Mammary epithelial cell (primary cell): ENCODE measurements at regions of chr19 and their contacts with region 1.

Region 1: GRCh38 chr19:940591-941291 is 14.9 kb downstream of the ARID3A start:
- DNase-seq: peak; percentile 59
- H3K4me3 ChIP-seq: peak overlapping the region in 2 of 3 experiments; percentile 7 to 28
- H3K27ac ChIP-seq: no peak overlapping the region
- H3K4me1 ChIP-seq: peaks cover 20% of the 10 kb centered on the region
- H3K27me3 ChIP-seq: no peaks in the 10 kb centered on the region
- CTCF ChIP-seq: no peak

Region 2: GRCh38 chr19:860481-861101 is 80.2 kb before region 1 on chr19:
- CTCF ChIA-PET with region 1: no interaction called
- dilution Hi-C with region 1: no loop called
- in situ Hi-C with region 1: no loop called
- intact Hi-C with region 1: no loop called
- DNase-seq: peak; percentile 61
- H3K4me3 ChIP-seq: peak overlapping the region in 1 of 3 experiments; percentile 20
- H3K27ac ChIP-seq: no peak overlapping the region
- H3K4me1 ChIP-seq: peaks cover 4% of the 10 kb centered on the region
- H3K27me3 ChIP-seq: no peaks in the 10 kb centered on the region
- CTCF ChIP-seq: no peak

Region 3: DNA sequence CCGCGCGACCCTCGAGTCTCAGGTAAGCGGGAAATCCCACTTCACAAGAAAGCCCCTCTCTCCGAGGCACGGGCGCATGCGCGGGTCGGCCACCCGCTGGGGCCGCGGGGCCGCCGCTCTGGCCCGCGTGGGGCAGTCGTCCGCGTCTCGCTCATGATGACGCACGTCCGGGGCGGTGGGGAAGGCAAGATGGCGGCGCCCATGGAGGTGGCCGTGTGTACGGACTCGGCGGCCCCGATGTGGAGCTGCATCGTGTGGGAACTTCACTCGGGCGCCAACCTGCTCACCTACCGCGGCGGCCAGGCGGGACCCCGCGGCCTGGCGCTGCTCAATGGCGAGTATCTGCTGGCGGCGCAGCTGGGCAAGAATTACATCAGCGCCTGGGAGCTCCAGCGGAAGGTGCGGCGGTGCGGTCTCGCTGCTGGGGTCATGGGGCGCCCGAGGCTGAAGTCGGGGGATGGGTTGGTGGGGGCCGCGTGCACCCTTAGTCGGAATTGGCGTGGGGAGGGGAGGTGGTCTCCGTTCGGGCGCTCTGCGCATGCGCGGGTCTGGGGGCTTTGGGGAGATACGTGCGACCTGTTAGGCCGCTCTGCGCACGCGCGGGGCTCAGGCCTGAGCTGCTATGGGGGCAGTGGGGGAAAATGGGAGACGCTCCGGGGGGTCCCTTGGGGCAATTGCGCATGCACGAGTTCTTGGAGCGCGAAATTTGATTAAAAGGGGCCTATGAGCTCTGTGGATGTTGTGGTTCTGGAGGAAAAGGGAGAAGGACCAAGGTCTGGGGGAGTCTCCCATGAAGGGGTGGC is 43.6 kb after region 1 on chr19 and contains the start of gene WDR18:
- CTCF ChIA-PET with region 1: no interaction called
- dilution Hi-C with region 1: no loop called
- in situ Hi-C with region 1: no loop called
- intact Hi-C with region 1: loop called (anchors 5 kb)
- DNase-seq: peak; percentile 83
- H3K4me3 ChIP-seq: peak within 1 kb of the TSS; percentile 79 to 99 (median 99)
- H3K27ac ChIP-seq: peak within 1 kb of the TSS; percentile 81
- H3K4me1 ChIP-seq: peaks cover 15% of the 10 kb centered on the region
- H3K27me3 ChIP-seq: no peaks in the 10 kb centered on the region
- CTCF ChIP-seq: peak in 1 of 2 donors; percentile 21
- total RNA-seq, gene WDR18: 42.0 to 84.1 TPM

Region 4: DNA sequence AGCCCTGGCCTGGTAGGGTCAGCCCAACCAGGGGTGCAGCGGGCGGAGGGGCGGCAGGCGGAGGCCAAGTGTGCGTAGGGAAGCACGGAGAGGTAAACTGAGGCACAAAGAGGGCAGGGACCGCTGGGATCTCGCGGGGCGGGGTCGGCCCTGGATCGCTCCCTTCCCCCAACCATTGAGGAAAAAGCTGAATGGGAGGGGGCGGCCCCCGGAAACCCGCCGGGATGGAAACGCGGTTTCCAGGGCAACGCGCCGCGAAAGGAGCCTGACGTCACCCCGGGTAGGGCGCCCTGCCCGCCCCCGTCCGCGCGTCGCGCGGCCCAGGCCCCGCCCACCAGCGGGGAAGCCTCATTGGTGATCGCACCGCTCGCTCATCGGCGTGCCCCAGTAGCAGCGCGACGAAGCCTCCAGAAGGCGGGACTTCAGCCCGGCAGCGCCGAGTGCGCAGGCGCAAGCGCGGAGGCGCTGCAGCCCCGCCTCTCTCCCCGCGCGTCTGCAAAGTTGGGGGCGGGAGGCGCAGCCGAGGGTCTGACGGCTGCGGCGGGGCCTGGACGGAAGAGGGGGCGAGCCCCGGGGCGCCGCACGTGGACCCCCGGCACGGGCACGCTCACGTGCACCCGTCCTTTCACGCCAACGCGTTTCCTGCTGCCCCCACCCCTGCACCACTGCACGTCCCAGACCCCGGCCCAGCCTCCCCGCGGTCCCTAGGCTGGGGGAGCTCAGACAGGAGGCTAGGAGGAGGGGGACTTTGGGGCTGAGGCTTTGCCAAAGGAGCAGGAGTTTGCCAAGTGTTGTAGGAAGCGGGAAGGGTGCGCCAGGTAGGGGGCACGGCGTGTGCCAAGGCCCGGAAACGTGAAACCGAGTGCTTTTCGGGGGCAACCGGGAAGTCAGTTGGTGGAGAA is 320.1 kb after region 1 on chr19:
- CTCF ChIA-PET with region 1: no interaction called
- dilution Hi-C with region 1: no loop called
- in situ Hi-C with region 1: no loop called
- intact Hi-C with region 1: no loop called
- DNase-seq: peak; percentile 94
- H3K4me3 ChIP-seq: peak overlapping the region; percentile 76 to 85 (median 79)
- H3K27ac ChIP-seq: peak overlapping the region; percentile 90
- H3K4me1 ChIP-seq: peaks cover 67% of the 10 kb centered on the region
- H3K27me3 ChIP-seq: no peaks in the 10 kb centered on the region
- CTCF ChIP-seq: no peak